Cardiac septum (tissue), 1 donor: ENCODE measurements at regions of chr11 and their contacts with region 1.

Region 1: DNA sequence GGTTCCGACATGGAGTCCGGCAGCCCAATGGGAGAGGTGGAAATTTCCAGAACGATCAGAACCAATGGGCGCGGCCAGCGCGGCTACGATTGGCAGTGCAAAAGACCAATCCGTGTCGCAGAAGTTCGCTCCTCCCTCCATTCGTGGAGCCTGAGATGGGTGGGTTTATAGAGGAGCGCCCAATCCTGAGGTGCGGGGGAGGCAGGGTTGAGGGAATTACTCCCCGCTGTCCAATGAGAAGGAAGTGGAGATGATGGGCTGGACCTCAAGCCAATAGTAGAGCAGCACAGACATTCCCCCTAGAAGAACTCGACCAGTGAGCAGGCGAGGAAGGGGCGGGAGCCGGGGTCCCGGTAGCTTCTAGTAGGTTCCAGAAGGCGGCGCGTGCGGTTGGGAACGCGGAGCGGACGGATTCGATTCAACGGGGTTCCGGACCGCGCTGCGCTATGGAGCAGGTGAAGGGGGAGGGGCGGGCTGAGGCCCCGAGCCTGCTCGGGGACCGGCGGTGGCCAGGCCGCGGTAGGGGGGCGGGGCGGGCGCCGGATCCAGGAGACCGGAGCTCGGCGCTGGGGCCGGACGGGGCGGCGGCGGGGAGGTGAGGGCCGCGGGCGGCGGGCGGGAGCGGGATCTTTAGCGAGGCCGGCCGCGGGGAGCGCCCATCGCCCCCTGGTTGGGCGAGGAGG is at the start of gene STIP1:
- DNase-seq: peak; percentile 98
- total RNA-seq, gene STIP1: 86.0 TPM

Region 2: GRCh38 chr11:64146036-64146962 is 39.7 kb before region 1 on chr11:
- intact Hi-C with region 1: no loop called
- DNase-seq: no peak

Region 3: GRCh38 chr11:64225612-64226506 is 39.9 kb after region 1 on chr11 and contains the starts of genes NUDT22 and TRPT1:
- intact Hi-C with region 1: loop called (anchors 5 kb)
- DNase-seq: peak; percentile 98
- total RNA-seq, gene NUDT22: 75.0 TPM
- total RNA-seq, gene TRPT1: 49.7 TPM

Region 4: GRCh38 chr11:64304316-64305072 is 118.5 kb after region 1 on chr11:
- intact Hi-C with region 1: no loop called
- DNase-seq: peak; percentile 96